Activated naive CD4-positive, alpha-beta T cell treated with anti-CD3 and anti-CD28 coated beads, Interleukin-2, amount 10 ng/mL, durations not matched to agents 7 days and 5 days (primary cell): ENCODE measurements at regions of chr21 and their contacts with region 1.

Region 1: GRCh38 chr21:42258153-42258884 is 39.4 kb downstream of the ABCG1 start:
- DNase-seq: peak; percentile 87
- H3K4me3 Mint-ChIP-seq: no peak overlapping the region
- H3K27ac Mint-ChIP-seq: no peak overlapping the region
- H3K4me1 Mint-ChIP-seq: peaks cover 26% of the 10 kb centered on the region
- H3K27me3 Mint-ChIP-seq: peaks cover 4% of the 10 kb centered on the region

Region 2: GRCh38 chr21:41895643-41896493 is 362.5 kb before region 1 on chr21:
- CTCF ChIA-PET with region 1: no interaction called
- DNase-seq: peak; percentile 81
- H3K4me3 Mint-ChIP-seq: no peak overlapping the region
- H3K27ac Mint-ChIP-seq: no peak overlapping the region
- H3K4me1 Mint-ChIP-seq: peaks cover 35% of the 10 kb centered on the region
- H3K27me3 Mint-ChIP-seq: no peaks in the 10 kb centered on the region

Region 3: DNA sequence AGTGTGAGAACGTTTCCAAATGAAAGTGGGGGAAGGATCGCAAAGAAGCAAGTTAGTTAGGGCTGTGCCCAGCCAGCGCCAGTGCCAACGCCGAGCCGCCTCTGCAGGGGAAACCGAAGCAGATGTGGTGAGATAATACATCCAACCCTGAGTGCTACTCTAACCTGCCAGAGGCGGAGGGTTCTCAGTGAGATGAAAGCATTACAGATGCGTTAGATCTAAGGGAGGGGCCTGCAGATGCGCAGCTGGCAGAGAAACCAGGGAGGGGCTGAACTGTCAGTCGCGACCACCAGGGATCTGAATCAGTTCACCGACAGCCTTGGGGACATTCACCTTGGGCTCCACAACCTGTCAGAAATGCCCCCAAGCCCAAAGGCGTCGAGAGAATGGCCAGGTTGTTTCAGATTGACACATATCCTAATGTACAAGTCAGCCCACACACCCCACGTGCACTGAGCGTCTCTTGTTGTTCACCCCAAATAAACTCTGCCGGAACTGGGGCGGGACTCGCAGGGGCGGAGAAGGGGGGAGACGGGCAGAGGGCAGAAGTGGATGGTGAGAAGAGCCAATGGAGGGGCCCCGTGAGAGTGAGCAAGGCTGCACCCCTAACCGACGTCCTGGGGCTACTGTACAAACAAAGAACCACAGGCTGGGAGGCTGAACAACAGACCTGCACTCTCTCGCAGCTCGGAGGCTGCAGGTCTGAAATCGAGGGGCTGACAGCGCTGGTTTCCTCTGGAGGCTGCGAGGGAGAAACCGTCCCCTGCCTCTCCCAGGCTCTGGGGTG is 195.9 kb before region 1 on chr21:
- CTCF ChIA-PET with region 1: no interaction called
- DNase-seq: peak; percentile 97
- H3K4me3 Mint-ChIP-seq: peak overlapping the region; percentile 88
- H3K27ac Mint-ChIP-seq: peak overlapping the region; percentile 100
- H3K4me1 Mint-ChIP-seq: peaks cover 56% of the 10 kb centered on the region
- H3K27me3 Mint-ChIP-seq: peaks cover 5% of the 10 kb centered on the region

Region 4: GRCh38 chr21:42135386-42136052 is 122.8 kb before region 1 on chr21:
- CTCF ChIA-PET with region 1: interaction called, 15 read pairs
- DNase-seq: no peak
- H3K4me3 Mint-ChIP-seq: no peak overlapping the region
- H3K27ac Mint-ChIP-seq: no peak overlapping the region
- H3K4me1 Mint-ChIP-seq: no peaks in the 10 kb centered on the region
- H3K27me3 Mint-ChIP-seq: peaks cover 12% of the 10 kb centered on the region

Region 5: GRCh38 chr21:42156690-42157577 is 101.4 kb before region 1 on chr21:
- CTCF ChIA-PET with region 1: interaction called, 135 read pairs
- DNase-seq: no peak
- H3K4me3 Mint-ChIP-seq: no peak overlapping the region
- H3K27ac Mint-ChIP-seq: no peak overlapping the region
- H3K4me1 Mint-ChIP-seq: peaks cover 13% of the 10 kb centered on the region
- H3K27me3 Mint-ChIP-seq: peaks cover 40% of the 10 kb centered on the region

Region 6: GRCh38 chr21:42193131-42193671 is 65.1 kb before region 1 on chr21:
- CTCF ChIA-PET with region 1: interaction called, 12 read pairs
- DNase-seq: peak; percentile 84
- H3K4me3 Mint-ChIP-seq: peak overlapping the region; percentile 4
- H3K27ac Mint-ChIP-seq: peak overlapping the region; percentile 82
- H3K4me1 Mint-ChIP-seq: peaks cover 80% of the 10 kb centered on the region
- H3K27me3 Mint-ChIP-seq: peaks cover 23% of the 10 kb centered on the region

Region 7: GRCh38 chr21:42227909-42228708 is 30.2 kb before region 1 on chr21:
- CTCF ChIA-PET with region 1: interaction called, 18 read pairs
- DNase-seq: peak; percentile 94
- H3K4me3 Mint-ChIP-seq: peak overlapping the region; percentile 11
- H3K27ac Mint-ChIP-seq: peak overlapping the region; percentile 87
- H3K4me1 Mint-ChIP-seq: peaks cover 87% of the 10 kb centered on the region
- H3K27me3 Mint-ChIP-seq: no peaks in the 10 kb centered on the region

Region 8: DNA sequence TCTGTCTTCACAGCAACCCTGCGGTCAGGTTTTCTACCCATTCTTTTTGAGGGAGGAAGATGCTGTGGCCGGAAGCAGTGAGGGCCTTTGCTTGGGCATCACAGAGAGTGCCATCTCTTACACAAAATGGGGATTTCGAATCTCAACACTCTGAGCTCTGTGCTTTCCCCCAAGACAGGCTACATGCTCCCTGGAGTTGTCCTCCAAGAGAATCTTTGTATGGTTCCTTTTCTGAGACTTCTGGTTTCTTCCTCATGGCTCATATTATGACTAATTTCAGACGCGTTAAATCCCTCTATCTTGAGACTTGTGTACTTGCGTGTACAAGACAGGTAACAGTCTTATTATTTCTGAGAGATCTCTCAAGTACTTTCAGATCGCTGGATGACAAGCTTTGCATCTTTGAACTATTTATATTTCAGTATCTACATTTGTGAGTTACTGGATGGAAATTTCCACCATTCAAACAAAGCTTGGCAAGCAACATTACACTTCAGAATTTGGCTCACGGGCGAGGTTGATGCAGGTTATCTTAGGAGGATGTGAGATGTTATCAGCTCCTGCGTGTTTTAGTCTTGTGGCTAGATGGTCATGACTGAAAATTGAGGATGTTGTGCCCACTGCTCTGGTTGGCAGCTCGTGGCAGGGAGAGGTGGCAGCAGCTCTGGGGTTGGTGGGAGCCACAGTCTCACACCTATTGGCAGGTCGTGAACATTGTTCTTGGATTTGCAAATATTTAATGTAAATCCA is 20.0 kb before region 1 on chr21:
- CTCF ChIA-PET with region 1: interaction called, 56 read pairs
- DNase-seq: peak; percentile 70
- H3K4me3 Mint-ChIP-seq: peak overlapping the region; percentile 43
- H3K27ac Mint-ChIP-seq: peak overlapping the region; percentile 77
- H3K4me1 Mint-ChIP-seq: peaks cover 70% of the 10 kb centered on the region
- H3K27me3 Mint-ChIP-seq: no peaks in the 10 kb centered on the region